ENCODE measurements at regions of chr2 and their contacts with region 1.

Region 1: GRCh38 chr2:27303093-27304025 is 4.9 kb downstream of the UCN start:
- DNase-seq: peak; percentile 70
- CTCF ChIP-seq: peak; percentile 77

Region 2: GRCh38 chr2:27102329-27102728 is 201.0 kb before region 1 on chr2:
- CTCF ChIA-PET with region 1: interaction called, 26 read pairs
- POLR2A ChIA-PET with region 1: no interaction called
- DNase-seq: no peak
- CTCF ChIP-seq: no peak

Region 3: DNA sequence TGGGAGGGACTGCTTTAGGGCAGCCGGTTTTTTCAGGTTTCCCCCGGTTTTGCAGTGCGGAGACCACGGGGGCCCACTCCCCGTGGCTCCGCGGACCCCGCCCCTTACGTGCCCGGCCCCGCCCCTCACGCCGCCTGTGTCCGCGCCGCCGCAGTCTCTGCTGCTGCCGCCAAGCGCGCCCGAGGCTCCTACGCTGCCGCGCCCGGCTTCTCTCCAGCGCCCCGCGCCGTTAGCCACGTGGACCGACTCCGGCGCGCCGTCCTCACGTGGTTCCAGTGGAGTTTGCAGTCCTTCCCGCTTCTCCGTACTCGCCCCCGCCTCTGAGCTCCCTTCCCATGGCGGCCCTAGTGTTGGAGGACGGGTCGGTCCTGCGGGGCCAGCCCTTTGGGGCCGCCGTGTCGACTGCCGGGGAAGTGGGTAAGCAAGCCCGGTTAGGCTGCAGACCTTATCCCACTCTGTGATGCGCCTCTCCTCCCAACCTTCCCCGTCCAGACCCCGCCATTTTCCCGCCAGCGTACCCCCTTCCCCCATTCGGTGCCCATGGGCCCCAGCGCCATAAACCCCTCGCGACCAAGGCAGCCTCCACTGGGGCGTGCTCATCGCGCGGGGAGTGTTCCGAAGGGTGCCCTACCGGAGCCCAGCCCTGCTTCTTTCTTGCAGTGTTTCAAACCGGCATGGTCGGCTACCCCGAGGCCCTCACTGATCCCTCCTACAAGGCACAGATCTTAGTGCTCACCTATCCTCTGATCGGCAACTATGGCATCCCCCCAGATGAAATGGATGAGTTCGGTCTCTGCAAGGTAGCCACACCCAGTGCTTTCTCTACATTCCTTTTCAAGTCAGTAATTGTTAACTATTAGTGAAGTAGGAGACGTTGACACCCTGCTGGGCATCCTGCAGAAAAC is 85.9 kb before region 1 on chr2 and contains the start of gene CAD:
- CTCF ChIA-PET with region 1: no interaction called
- POLR2A ChIA-PET with region 1: no interaction called
- DNase-seq: peak; percentile 93
- CTCF ChIP-seq: peak; percentile 23

Region 4: DNA sequence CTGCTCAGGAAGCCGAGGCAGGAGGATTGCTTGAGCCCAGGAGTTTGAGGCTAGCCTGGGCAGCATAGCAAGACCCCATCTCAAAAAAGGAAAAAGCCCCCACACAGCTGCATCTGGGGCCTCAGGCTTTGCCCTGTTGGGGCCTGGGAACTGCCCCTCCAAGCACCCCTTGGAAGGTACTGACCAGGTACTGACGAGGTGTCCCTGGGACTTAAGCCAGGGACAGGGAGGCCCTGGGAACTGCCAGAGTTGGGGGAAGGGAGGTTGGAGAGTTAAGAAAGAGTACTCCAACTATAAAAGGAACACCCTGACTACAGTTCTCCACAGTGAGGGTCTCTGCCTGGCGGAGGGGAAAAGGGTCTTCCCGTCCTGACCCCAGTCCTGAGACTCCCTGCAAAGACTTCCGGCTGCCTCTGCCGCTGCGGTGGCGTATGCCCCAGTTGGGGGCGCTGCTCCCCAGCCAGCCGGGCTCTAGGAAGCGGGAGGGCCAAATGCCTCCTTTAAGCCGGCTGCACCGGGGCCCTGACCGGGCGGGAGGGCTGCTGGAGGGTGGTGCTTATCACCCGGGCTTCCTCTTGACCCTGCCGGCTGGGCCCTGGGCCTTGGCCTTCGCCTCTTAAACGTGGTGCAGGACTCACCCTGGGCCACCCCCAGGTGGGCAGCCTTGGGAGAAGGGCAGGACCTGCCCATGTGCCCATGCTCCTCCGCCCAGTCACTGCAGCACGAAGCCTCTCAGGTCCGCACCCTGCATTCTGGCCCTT is 53.3 kb before region 1 on chr2:
- CTCF ChIA-PET with region 1: interaction called, 24 read pairs
- POLR2A ChIA-PET with region 1: no interaction called
- DNase-seq: peak; percentile 82
- CTCF ChIP-seq: peak; percentile 76

Region 5: GRCh38 chr2:27291865-27292264 is 11.5 kb before region 1 on chr2:
- CTCF ChIA-PET with region 1: interaction called, 87 read pairs
- POLR2A ChIA-PET with region 1: no interaction called
- DNase-seq: no peak
- CTCF ChIP-seq: no peak

Region 6: DNA sequence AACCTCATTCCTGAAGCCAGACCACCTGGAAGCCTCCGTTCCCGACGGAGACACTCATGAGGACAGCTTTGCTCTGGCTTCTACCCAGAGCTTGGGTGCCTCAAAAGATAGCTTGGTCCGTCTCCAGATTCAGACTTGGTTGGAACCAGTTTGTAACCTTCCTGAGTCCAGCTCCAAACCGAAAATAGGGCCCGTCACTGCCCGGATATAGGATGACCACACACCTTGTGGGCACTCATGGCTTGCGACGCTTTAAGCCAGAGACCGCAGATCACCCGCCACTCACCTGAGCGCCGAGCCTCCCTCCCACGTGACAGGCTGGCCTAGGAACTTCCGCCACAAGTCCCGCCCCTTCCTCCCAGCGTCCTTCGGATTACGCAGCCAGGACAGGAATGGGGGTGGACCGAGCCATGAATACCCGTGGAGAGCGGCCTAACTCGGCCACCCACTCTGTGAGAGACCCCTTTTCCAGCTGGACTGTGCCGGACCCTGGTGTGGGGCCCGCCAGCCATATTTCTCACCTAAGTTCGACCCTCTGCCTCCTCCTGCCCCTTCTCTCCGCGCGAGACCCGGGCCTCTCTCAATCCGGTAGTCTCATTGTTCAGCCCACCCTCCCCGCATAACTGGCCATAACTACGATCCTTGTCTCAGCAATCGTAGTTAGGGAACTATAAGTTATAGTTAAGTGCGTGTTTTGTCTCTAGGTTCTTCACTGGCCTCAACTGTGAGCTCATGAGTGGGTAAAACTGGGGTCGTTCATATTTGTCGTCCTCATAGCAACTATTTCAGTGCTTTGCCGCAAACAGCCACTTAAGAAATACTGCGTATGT is 19.6 kb after region 1 on chr2 and contains the start of gene MPV17:
- CTCF ChIA-PET with region 1: interaction called, 33 read pairs
- POLR2A ChIA-PET with region 1: no interaction called
- DNase-seq: peak; percentile 96
- CTCF ChIP-seq: no peak